PC-9 (cell line): ENCODE measurements at regions of chr9 and their contacts with region 1.

Region 1: GRCh38 chr9:98118640-98119601 is at the start of gene TRIM14:
- DNase-seq: peak in 1 of 2 experiments; percentile 69
- H3K4me3 ChIP-seq: peak within 1 kb of the TSS; percentile 80
- H3K27ac ChIP-seq: no peak within 1 kb of the TSS
- H3K4me1 ChIP-seq: peaks cover 29% of the 10 kb centered on the region
- H3K27me3 ChIP-seq: no peaks in the 10 kb centered on the region
- CTCF ChIP-seq: peak; percentile 45; the same call in 1 of the 2 replicates
- total RNA-seq, gene TRIM14: 18.1 and 20.2 TPM in 2 replicates

Region 2: GRCh38 chr9:98081477-98082219 is 37.3 kb before region 1 on chr9:
- CTCF ChIA-PET with region 1: interaction called, 3 read pairs
- POLR2A ChIA-PET with region 1: interaction called, 4 read pairs
- intact Hi-C with region 1: loop called (anchors 2 kb)
- DNase-seq: peak; percentile 79 to 94
- H3K4me3 ChIP-seq: no peak overlapping the region
- H3K27ac ChIP-seq: peak overlapping the region; percentile 72
- H3K4me1 ChIP-seq: peaks cover 29% of the 10 kb centered on the region
- H3K27me3 ChIP-seq: no peaks in the 10 kb centered on the region
- CTCF ChIP-seq: no peak

Region 3: GRCh38 chr9:98168941-98169488 is 50.1 kb after region 1 on chr9:
- CTCF ChIA-PET with region 1: interaction called, 3 read pairs
- POLR2A ChIA-PET with region 1: no interaction called
- intact Hi-C with region 1: loop called (anchors 2 kb)
- DNase-seq: peak; percentile 50 to 59
- H3K4me3 ChIP-seq: no peak overlapping the region
- H3K27ac ChIP-seq: peak overlapping the region; percentile 20; the same call in 1 of the 2 replicates
- H3K4me1 ChIP-seq: peaks cover 35% of the 10 kb centered on the region
- H3K27me3 ChIP-seq: no peaks in the 10 kb centered on the region
- CTCF ChIP-seq: no peak

Region 4: DNA sequence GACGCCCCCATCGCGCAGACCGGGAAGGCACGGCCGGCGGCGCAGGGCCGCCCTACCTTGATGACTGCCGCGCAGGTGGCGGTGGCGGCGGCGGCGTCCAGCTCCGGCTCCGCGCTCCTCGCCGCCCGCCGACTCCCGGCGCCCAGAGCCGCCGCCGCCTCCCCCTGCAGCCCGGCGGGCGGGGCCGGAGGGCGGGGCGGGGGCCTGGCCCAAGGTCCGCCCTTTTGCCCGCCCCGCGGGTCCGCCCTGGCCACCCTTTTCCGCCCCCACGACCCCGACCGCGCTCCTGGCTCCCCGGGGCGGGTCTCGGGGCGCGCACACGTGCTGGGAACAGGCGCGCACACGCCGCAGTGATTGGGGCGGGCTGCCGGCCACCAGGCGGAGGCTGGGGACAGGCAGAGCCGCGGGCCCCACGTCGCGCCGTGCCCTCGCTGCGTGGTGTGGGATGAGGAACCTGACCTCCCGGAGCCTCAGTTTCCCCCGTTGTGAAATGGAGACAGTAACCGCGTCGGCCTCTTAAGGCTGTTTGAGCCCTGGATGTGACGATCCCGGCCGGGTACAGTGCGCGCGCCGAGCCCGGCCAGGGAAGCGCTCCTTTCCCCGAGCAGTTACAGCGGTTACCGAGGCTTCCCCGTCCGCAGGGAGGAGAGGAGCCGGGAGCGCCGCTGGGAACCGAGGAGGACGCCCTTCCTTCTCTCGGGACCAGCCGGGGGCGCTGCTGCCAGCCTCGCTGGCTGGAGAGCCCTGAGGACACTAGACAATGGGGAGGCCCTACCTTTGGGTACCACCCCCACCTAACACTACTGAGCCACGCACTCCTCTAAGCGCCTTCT is 73.8 kb after region 1 on chr9 and contains the start of gene CORO2A:
- CTCF ChIA-PET with region 1: interaction called, 15 read pairs
- POLR2A ChIA-PET with region 1: interaction called, 3 read pairs
- intact Hi-C with region 1: loop called (anchors 1 kb)
- DNase-seq: peak; percentile 74 to 93
- H3K4me3 ChIP-seq: peak within 1 kb of the TSS; percentile 63
- H3K27ac ChIP-seq: peak within 1 kb of the TSS; percentile 46
- H3K4me1 ChIP-seq: peaks cover 16% of the 10 kb centered on the region
- H3K27me3 ChIP-seq: no peaks in the 10 kb centered on the region
- CTCF ChIP-seq: peak; percentile 62; the same call in 1 of the 2 replicates
- total RNA-seq, gene CORO2A: 19.5 and 19.8 TPM in 2 replicates

Region 5: GRCh38 chr9:98383758-98384157 is 264.8 kb after region 1 on chr9:
- CTCF ChIA-PET with region 1: no interaction called
- POLR2A ChIA-PET with region 1: no interaction called
- intact Hi-C with region 1: no loop called
- DNase-seq: no peak
- H3K4me3 ChIP-seq: no peak overlapping the region
- H3K27ac ChIP-seq: no peak overlapping the region
- H3K4me1 ChIP-seq: peaks cover 11% of the 10 kb centered on the region
- H3K27me3 ChIP-seq: no peaks in the 10 kb centered on the region
- CTCF ChIP-seq: no peak